ENCODE measurements at regions of chr9 and their contacts with region 1.

Region 1: DNA sequence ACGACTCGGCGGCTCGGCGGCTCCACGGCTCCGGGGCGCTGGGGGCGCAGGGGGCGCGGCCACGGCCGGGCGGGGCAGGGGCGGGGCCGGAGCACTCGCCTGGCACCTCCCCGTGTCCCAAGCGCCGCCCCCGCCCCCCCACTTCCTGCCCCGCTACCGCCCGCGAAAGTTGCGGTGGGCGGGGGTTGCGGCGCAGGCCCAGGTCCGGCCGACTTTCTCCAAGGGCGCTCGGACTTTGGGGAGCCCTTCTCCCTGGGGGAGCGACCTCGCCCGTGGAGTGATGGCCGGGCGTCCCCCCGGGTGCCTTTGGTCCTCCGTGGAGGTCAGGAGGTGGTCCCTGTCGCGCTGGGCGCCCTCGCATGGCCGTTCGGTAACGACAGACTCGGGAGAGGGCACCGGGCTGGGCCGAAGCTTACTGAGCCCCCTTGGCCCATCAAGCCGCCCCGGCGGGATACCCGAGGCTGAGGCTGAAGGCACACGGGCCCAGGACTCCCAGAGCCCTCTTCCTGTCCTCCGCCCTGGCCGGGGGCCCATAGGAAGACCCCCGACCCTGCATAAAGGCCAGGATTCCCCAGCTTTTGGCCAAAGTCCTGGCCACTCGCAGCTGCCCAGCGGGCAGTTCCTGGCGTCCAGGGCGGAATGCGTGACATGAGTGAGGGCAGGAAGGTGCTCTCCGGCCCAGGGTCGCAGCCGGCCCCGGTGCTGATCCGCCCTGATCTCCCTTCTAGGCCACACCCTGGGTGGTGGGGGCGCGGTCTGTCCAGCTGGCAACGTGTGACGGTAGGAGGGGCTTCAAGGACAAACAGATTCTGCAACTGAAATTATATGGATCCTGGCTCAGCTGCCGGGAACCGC is 883 bp upstream of the VAV2 start:
- DNase-seq: peak; percentile 47 to 77 (median 63)
- ATAC-seq: peak; percentile 89
- H3K4me3 ChIP-seq: peak overlapping the region; percentile 77
- H3K4me3 Mint-ChIP-seq: peak overlapping the region; percentile 62 to 89 (median 76)
- H3K27ac ChIP-seq: peak overlapping the region; percentile 30
- H3K27ac Mint-ChIP-seq: no peak overlapping the region
- H3K4me1 ChIP-seq: peaks cover 9 to 12% of the 10 kb centered on the region in 2 donors
- H3K4me1 Mint-ChIP-seq: peaks cover 0 to 8% (median 0%) of the 10 kb centered on the region in 7 donors
- H3K27me3 ChIP-seq: no peaks in the 10 kb centered on the region
- H3K27me3 Mint-ChIP-seq: peaks cover 0 to 26% (median 4%) of the 10 kb centered on the region in 5 donors

Region 2: GRCh38 chr9:133459476-133460404 is 533.3 kb before region 1 on chr9 and contains the start of gene CACFD1:
- CTCF ChIA-PET with region 1: no interaction called
- POLR2A ChIA-PET with region 1: no interaction called
- intact Hi-C with region 1: loop called in 1 of 2 experiments (anchors 10 kb)
- DNase-seq: peak; percentile 81 to 91 (median 85)
- ATAC-seq: peak; percentile 87
- H3K4me3 ChIP-seq: peak within 1 kb of the TSS; percentile 88
- H3K4me3 Mint-ChIP-seq: peak within 1 kb of the TSS; percentile 88 to 94 (median 90)
- H3K27ac ChIP-seq: peak within 1 kb of the TSS; percentile 79
- H3K27ac Mint-ChIP-seq: peak within 1 kb of the TSS; percentile 54 to 94 (median 92)
- H3K4me1 ChIP-seq: peaks cover 6% of the 10 kb centered on the region in 2 donors
- H3K4me1 Mint-ChIP-seq: peaks cover 0 to 7% (median 4%) of the 10 kb centered on the region in 7 donors
- H3K27me3 ChIP-seq: no peaks in the 10 kb centered on the region
- H3K27me3 Mint-ChIP-seq: peaks cover 0 to 10% (median 0%) of the 10 kb centered on the region in 5 donors
- total RNA-seq, gene CACFD1: 0.56 to 4.7 (median 3.1) TPM

Region 3: DNA sequence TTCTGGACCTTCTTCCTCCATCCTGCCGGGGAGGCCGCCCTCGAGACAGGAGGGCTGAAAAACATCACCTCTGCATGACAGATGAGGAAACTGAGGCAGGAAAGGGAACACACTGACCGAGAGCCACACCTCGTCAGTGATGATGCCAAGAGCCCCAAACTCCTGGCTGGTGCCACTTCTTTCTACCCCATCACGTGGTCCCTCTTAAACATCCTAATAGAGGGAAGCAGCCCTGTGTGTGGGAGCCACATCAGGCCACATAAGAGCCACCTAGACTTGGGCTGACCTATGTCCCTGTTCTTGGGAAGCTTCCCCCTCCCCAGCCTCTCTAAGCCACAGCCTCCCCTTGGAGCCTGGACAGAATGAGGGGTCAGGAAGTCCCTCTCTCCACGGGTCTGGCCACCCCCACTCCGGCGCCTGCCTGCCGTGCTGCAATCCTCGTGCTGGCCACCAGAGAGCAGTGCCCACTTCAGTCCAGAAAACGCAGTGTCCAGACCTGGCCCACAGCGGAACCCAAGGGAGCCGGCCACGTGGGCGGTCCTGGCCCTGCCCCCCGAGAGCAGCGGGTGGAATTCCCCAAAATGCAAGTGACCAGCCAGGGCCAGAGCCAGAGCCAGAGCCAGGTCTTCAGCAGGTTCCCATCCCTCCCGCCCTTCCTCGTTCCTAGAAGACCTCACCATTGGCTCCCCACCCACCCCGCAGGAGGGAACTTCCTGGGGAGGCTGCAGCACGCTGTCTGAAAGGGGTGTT is 200.1 kb before region 1 on chr9:
- CTCF ChIA-PET with region 1: interaction called, 32 read pairs
- POLR2A ChIA-PET with region 1: no interaction called
- intact Hi-C with region 1: loop called (anchors 1 kb)
- DNase-seq: peak; percentile 5 to 63 (median 34)
- ATAC-seq: peak; percentile 88
- H3K4me3 ChIP-seq: no peak overlapping the region
- H3K4me3 Mint-ChIP-seq: no peak overlapping the region
- H3K27ac ChIP-seq: no peak overlapping the region
- H3K27ac Mint-ChIP-seq: no peak overlapping the region
- H3K4me1 ChIP-seq: no peaks in the 10 kb centered on the region
- H3K4me1 Mint-ChIP-seq: peaks cover 0 to 7% (median 5%) of the 10 kb centered on the region in 7 donors
- H3K27me3 ChIP-seq: no peaks in the 10 kb centered on the region
- H3K27me3 Mint-ChIP-seq: peaks cover 0 to 4% (median 0%) of the 10 kb centered on the region in 5 donors

Region 4: GRCh38 chr9:133855802-133856521 is 137.0 kb before region 1 on chr9:
- CTCF ChIA-PET with region 1: no interaction called
- POLR2A ChIA-PET with region 1: no interaction called
- intact Hi-C with region 1: no loop called
- DNase-seq: peak in 1 of 9 donors; percentile 23
- ATAC-seq: peak; percentile 82
- H3K4me3 ChIP-seq: no peak overlapping the region
- H3K4me3 Mint-ChIP-seq: no peak overlapping the region
- H3K27ac ChIP-seq: no peak overlapping the region
- H3K27ac Mint-ChIP-seq: peak overlapping the region in 1 of 9 donors; percentile 53
- H3K4me1 ChIP-seq: no peaks in the 10 kb centered on the region
- H3K4me1 Mint-ChIP-seq: peaks cover 0 to 8% (median 0%) of the 10 kb centered on the region in 7 donors
- H3K27me3 ChIP-seq: no peaks in the 10 kb centered on the region
- H3K27me3 Mint-ChIP-seq: no peaks in the 10 kb centered on the region

Region 5: DNA sequence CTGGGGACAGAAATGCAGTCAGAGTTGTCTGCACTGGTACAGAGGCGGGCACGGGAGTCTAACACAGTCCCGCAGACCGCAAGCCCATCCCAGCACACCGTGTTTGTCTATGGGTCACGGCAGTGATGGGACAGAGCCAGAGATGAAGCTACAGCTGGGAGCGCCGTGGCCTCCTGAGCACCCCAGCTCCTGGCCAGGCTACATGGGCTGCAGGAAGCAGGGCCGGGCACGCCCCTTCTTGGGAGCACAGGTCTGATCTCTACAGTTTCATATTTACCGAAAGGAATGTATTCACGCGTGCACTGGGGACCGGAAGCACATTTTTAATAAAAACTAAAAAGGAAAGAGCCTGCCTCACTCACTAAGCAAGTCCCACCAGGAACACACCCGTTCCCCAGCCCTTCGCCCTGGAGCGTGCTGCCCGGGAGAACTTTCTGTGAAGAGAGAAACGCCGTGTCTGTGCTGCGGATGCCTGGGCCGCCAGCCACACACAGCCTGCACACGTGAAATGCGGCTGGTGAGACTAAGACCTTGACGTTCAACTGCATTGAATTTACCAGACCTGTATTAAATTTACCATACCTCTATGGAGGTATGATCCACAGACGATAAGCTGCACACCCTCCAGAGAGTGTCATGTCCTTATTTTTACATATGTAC is 82.0 kb before region 1 on chr9:
- CTCF ChIA-PET with region 1: no interaction called
- POLR2A ChIA-PET with region 1: no interaction called
- intact Hi-C with region 1: no loop called
- DNase-seq: no peak
- ATAC-seq: no peak
- H3K4me3 ChIP-seq: no peak overlapping the region
- H3K4me3 Mint-ChIP-seq: no peak overlapping the region
- H3K27ac ChIP-seq: no peak overlapping the region
- H3K27ac Mint-ChIP-seq: no peak overlapping the region
- H3K4me1 ChIP-seq: no peaks in the 10 kb centered on the region
- H3K4me1 Mint-ChIP-seq: peaks cover 0 to 12% (median 9%) of the 10 kb centered on the region in 7 donors
- H3K27me3 ChIP-seq: no peaks in the 10 kb centered on the region
- H3K27me3 Mint-ChIP-seq: peaks cover 0 to 5% (median 0%) of the 10 kb centered on the region in 5 donors

Region 6: GRCh38 chr9:133955821-133956411 is 37.1 kb before region 1 on chr9:
- CTCF ChIA-PET with region 1: interaction called, 3 read pairs
- POLR2A ChIA-PET with region 1: no interaction called
- intact Hi-C with region 1: loop called in 1 of 2 experiments (anchors 1 kb)
- DNase-seq: peak in 6 of 9 donors; percentile 8 to 34 (median 20)
- ATAC-seq: peak; percentile 61
- H3K4me3 ChIP-seq: no peak overlapping the region
- H3K4me3 Mint-ChIP-seq: peak overlapping the region; percentile 38 to 84 (median 64)
- H3K27ac ChIP-seq: peak overlapping the region; percentile 60
- H3K27ac Mint-ChIP-seq: peak overlapping the region; percentile 46 to 93 (median 84)
- H3K4me1 ChIP-seq: peaks cover 0 to 16% of the 10 kb centered on the region in 2 donors
- H3K4me1 Mint-ChIP-seq: peaks cover 7 to 34% (median 22%) of the 10 kb centered on the region in 7 donors
- H3K27me3 ChIP-seq: no peaks in the 10 kb centered on the region
- H3K27me3 Mint-ChIP-seq: peaks cover 0 to 3% (median 0%) of the 10 kb centered on the region in 5 donors

Region 7: DNA sequence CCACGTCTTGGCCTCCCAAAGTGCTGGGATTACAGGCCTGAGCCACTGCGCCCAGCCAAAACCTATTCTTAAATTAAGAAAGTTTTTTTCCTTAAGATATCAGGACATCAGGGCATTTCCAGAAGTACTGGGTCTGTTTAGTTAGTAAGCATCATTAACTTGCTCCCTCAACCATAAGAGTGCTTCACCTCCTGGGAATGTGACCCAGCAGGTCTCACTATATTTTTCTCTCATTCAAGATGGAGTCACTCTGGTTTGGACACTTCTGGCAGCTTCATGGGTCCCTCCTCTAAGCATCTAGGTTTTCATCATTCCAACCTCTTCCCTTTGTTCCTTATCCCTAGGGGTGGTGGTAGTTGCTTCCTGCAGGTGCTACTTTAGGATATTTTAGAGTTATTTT is 21.9 kb after region 1 on chr9:
- CTCF ChIA-PET with region 1: no interaction called
- POLR2A ChIA-PET with region 1: no interaction called
- intact Hi-C with region 1: no loop called
- DNase-seq: no peak
- ATAC-seq: no peak
- H3K4me3 ChIP-seq: no peak overlapping the region
- H3K4me3 Mint-ChIP-seq: no peak overlapping the region
- H3K27ac ChIP-seq: no peak overlapping the region
- H3K27ac Mint-ChIP-seq: no peak overlapping the region
- H3K4me1 ChIP-seq: no peaks in the 10 kb centered on the region
- H3K4me1 Mint-ChIP-seq: peaks cover 0 to 2% (median 0%) of the 10 kb centered on the region in 7 donors
- H3K27me3 ChIP-seq: no peaks in the 10 kb centered on the region
- H3K27me3 Mint-ChIP-seq: peaks cover 0 to 3% (median 0%) of the 10 kb centered on the region in 5 donors

Region 8: DNA sequence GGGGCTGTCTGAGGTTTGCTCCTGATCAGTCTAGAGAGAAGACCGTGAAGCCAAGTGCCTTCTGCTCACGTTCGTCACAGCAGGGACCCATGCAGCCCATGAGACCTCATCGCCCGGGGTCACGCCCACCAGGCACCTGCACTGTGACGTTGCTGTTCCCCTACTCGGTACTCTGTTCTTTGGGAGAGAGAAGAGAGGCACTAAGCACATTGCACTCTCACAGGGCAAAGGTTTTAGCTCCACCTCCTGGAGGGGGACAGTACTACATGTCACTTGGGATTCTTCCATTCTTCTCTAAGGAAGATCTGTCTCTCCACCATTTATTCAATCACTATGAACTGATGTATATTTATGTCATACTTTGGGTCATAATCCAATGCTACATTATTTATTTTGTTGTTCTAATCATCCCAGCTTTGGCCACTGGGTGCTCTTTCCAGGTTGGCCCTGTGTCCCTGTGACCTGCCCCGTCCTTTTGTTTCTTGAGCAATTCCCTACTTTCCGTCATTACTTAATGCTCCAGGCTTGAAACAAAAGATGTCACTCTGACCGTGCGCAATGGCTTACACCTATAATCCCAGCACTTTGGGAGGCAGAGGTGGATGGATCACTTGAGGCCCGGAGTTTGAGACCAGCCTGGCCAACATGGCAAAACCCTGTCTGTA is 106.2 kb after region 1 on chr9:
- CTCF ChIA-PET with region 1: no interaction called
- POLR2A ChIA-PET with region 1: no interaction called
- intact Hi-C with region 1: loop called in 1 of 2 experiments (anchors 1 kb)
- DNase-seq: peak; percentile 13 to 60 (median 55)
- ATAC-seq: peak; percentile 90
- H3K4me3 ChIP-seq: no peak overlapping the region
- H3K4me3 Mint-ChIP-seq: no peak overlapping the region
- H3K27ac ChIP-seq: no peak overlapping the region
- H3K27ac Mint-ChIP-seq: no peak overlapping the region
- H3K4me1 ChIP-seq: no peaks in the 10 kb centered on the region
- H3K4me1 Mint-ChIP-seq: peaks cover 0 to 5% (median 3%) of the 10 kb centered on the region in 7 donors
- H3K27me3 ChIP-seq: no peaks in the 10 kb centered on the region
- H3K27me3 Mint-ChIP-seq: peaks cover 2 to 23% (median 15%) of the 10 kb centered on the region in 5 donors

Region 9: GRCh38 chr9:134136119-134136995 is 143.3 kb after region 1 on chr9:
- CTCF ChIA-PET with region 1: no interaction called
- POLR2A ChIA-PET with region 1: no interaction called
- intact Hi-C with region 1: no loop called
- DNase-seq: peak in 5 of 9 donors; percentile 9 to 30 (median 15)
- ATAC-seq: peak; percentile 34
- H3K4me3 ChIP-seq: peak overlapping the region; percentile 81
- H3K4me3 Mint-ChIP-seq: peak overlapping the region; percentile 87 to 98 (median 90)
- H3K27ac ChIP-seq: peak overlapping the region; percentile 68
- H3K27ac Mint-ChIP-seq: peak overlapping the region; percentile 40 to 91 (median 72)
- H3K4me1 ChIP-seq: peaks cover 19 to 28% of the 10 kb centered on the region in 2 donors
- H3K4me1 Mint-ChIP-seq: peaks cover 31 to 65% (median 49%) of the 10 kb centered on the region in 7 donors
- H3K27me3 ChIP-seq: no peaks in the 10 kb centered on the region
- H3K27me3 Mint-ChIP-seq: no peaks in the 10 kb centered on the region